Endothelial cell of umbilical vein (primary cell): ENCODE measurements at regions of chr12 and their contacts with region 1.

Region 1: DNA sequence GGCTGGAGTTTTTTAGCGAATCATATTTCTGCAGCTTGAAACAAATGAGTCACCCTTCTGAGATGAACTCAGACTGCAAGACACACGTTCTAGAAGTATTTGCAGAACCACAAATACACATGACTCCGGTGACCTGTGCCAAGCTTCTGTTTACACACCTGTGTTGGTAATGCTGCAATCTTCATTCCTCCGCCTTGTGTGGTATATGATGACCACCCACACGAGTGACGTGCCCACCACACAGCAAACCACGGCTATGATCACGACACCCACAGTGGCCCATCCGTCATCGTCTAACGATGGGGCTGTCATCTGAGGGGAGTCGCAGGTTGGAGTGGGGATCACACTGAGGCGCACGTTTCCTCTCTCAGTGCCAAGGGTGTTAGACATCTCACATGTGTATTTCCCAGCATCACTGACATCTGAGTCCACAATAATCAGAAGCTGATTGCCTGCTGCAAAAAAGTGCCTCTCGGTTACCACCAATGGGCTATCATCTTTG is 43.0 kb downstream of the LRIG3 start:
- DNase-seq: no peak
- H3K4me3 ChIP-seq: no peak overlapping the region
- H3K27ac ChIP-seq: no peak overlapping the region
- H3K4me1 ChIP-seq: no peaks in the 10 kb centered on the region
- H3K27me3 ChIP-seq: no peaks in the 10 kb centered on the region
- CTCF ChIP-seq: no peak
- POLR2A ChIP-seq: no peak

Region 2: GRCh38 chr12:57983146-57983857 is 894.0 kb before region 1 on chr12:
- CTCF ChIA-PET with region 1: interaction called, 5 read pairs
- POLR2A ChIA-PET with region 1: no interaction called
- dilution Hi-C with region 1: no loop called
- intact Hi-C with region 1: loop called (anchors 10 kb)
- DNase-seq: peak; percentile 72
- H3K4me3 ChIP-seq: no peak overlapping the region
- H3K27ac ChIP-seq: no peak overlapping the region
- H3K4me1 ChIP-seq: no peaks in the 10 kb centered on the region
- H3K27me3 ChIP-seq: peaks cover 0 to 3% of the 10 kb centered on the region in 2 experiments
- CTCF ChIP-seq: peak; percentile 25 to 55
- POLR2A ChIP-seq: no peak

Region 3: DNA sequence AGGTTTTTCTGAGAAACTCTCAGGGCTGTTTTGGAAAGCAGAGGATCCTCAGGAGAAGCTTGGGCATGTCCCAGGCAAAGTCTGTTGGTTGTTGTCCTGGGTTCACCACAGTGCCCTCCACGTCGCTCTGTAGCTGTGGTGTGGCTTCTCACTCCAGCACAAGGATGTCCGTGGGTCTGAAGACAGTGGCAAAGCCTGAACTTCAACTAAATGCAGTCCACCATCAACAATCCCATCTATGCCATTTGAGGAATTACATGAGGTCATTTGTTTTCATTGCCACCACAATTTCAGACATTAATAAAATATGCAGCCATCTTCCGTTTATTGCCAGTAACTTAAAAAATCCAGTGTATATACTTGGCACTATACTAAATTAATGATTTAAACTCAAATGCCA is 229.1 kb before region 1 on chr12:
- CTCF ChIA-PET with region 1: no interaction called
- POLR2A ChIA-PET with region 1: no interaction called
- dilution Hi-C with region 1: no loop called
- intact Hi-C with region 1: no loop called
- DNase-seq: no peak
- H3K4me3 ChIP-seq: no peak overlapping the region
- H3K27ac ChIP-seq: no peak overlapping the region
- H3K4me1 ChIP-seq: no peaks in the 10 kb centered on the region
- H3K27me3 ChIP-seq: no peaks in the 10 kb centered on the region
- CTCF ChIP-seq: no peak
- POLR2A ChIP-seq: no peak